ENCODE measurements at regions of chr16 and their contacts with region 1.

Region 1: GRCh38 chr16:14586637-14587305 is 43.3 kb downstream of the PARN start:
- DNase-seq: no peak
- ATAC-seq: no peak
- H3K4me3 ChIP-seq: no peak overlapping the region
- H3K27ac ChIP-seq: no peak overlapping the region
- H3K4me1 ChIP-seq: no peaks in the 10 kb centered on the region
- H3K27me3 ChIP-seq: no peaks in the 10 kb centered on the region
- CTCF ChIP-seq: no peak
- POLR2A ChIP-seq: no peak
- RAD21 ChIP-seq: no peak

Region 2: DNA sequence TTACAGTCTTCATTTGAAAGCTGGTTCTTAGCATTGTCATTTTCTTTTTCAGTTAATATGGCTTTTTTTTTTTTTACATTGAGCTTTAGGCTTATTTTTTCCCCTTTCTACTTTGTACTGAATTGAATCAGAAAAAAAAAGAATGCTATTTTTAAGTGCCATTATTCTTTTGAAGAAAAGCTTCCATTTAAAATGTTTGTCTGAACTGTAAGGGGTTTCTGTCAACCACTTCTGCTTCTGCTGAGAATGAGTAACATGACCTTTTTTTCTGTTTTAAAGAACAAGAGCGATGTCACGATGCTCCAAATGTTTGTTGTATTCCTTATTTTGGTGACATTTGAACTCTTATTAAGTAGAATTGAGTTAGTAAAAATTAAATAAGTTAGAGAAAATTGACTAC is 465.6 kb before region 1 on chr16:
- CTCF ChIA-PET with region 1: no interaction called
- POLR2A ChIA-PET with region 1: no interaction called
- dilution Hi-C with region 1: no loop called
- in situ Hi-C with region 1: no loop called
- intact Hi-C with region 1: no loop called
- DNase-seq: no peak
- ATAC-seq: no peak
- H3K4me3 ChIP-seq: no peak overlapping the region
- H3K27ac ChIP-seq: no peak overlapping the region
- H3K4me1 ChIP-seq: no peaks in the 10 kb centered on the region
- H3K27me3 ChIP-seq: no peaks in the 10 kb centered on the region
- CTCF ChIP-seq: no peak
- POLR2A ChIP-seq: no peak
- RAD21 ChIP-seq: no peak

Region 3: DNA sequence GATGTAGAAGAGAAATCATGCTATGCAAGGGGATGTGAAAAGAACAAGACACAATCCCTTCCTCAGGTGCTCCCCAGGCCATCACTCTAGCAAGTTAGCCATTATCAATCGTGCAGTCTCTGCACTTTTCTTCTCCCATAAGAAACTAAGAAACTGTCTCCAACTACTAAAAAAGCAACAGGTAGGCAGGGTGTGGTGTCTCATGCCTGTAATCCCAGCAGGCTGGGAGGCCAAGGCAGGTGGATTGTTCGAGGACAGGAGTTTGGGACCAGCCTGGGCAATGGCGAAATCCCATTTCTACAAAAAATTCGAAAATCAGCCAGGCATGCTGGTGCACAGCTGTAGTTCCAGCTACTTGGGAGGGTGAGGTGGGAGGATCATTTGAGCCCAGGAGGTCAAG is 29.5 kb after region 1 on chr16:
- CTCF ChIA-PET with region 1: no interaction called
- POLR2A ChIA-PET with region 1: no interaction called
- dilution Hi-C with region 1: no loop called
- in situ Hi-C with region 1: no loop called
- intact Hi-C with region 1: loop called (anchors 1 kb)
- DNase-seq: no peak
- ATAC-seq: no peak
- H3K4me3 ChIP-seq: no peak overlapping the region
- H3K27ac ChIP-seq: no peak overlapping the region
- H3K4me1 ChIP-seq: no peaks in the 10 kb centered on the region
- H3K27me3 ChIP-seq: no peaks in the 10 kb centered on the region
- CTCF ChIP-seq: no peak
- POLR2A ChIP-seq: no peak
- RAD21 ChIP-seq: no peak